ENCODE measurements at regions of chr12 and their contacts with region 1.

Region 1: DNA sequence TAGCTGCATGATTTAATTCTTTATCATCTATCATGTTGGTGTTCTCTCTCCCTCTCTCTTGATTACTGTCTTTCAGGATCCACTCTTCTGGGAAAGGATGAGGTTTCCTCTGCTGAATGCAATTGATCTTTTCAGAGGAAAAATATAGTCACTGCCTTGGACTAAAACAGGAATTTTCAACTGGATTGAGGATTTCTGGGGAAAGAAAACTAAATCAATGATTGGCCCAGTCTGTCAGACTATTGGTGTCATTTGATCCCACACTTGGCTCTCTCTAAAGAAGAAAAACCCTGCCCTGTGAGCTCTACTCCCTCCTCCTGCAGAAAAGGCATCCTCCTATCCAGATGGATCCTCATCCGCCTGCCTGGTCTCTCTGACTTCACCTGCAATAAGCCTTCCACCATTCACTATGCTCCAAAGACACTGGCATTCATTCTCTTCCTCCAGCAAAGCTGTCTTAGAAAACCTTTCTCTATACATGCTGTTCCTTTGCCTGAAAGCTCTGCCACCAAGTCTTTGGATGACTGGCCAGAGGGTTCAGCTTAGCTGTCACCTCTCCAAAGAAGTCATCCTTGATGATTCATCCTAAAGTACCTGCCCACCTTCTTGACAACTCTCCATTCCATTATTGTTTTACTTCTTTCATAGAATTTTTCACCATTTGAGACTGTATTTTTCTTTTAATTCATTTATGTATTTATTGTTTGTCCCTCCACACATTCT is 127.7 kb upstream of the CAND1 start:
- DNase-seq: no peak
- H3K4me3 Mint-ChIP-seq: no peak overlapping the region
- H3K27ac Mint-ChIP-seq: no peak overlapping the region
- H3K4me1 Mint-ChIP-seq: peaks cover 5% of the 10 kb centered on the region
- H3K27me3 Mint-ChIP-seq: peaks cover 17% of the 10 kb centered on the region
- CTCF ChIP-seq: no peak

Region 2: DNA sequence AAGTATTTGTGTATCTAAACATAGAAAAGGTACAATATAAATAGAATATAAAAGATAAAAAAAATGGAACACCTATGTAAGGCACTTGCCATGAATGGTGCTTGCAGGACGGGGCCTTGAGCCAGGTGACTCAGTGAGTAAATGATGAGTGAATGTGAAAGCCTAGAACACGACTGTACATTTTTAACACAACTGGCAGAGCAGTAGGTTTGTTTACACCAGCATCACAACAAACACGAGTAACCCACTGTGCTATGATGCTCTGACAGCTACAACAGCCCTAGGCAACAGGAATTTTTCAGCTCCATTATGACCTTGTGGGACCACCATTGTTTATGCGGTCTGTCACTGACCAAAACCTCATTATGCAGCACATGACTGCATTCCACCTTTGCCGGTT is 107.0 kb before region 1 on chr12:
- CTCF ChIA-PET with region 1: no interaction called
- POLR2A ChIA-PET with region 1: no interaction called
- intact Hi-C with region 1: loop called (anchors 10 kb)
- DNase-seq: peak; percentile 90
- H3K4me3 Mint-ChIP-seq: no peak overlapping the region
- H3K27ac Mint-ChIP-seq: no peak overlapping the region
- H3K4me1 Mint-ChIP-seq: peaks cover 4% of the 10 kb centered on the region
- H3K27me3 Mint-ChIP-seq: no peaks in the 10 kb centered on the region
- CTCF ChIP-seq: no peak